H1 (cell line): ENCODE measurements at regions of chr1 and their contacts with region 1.

Region 1: GRCh38 chr1:1565340-1565739 is 9.3 kb downstream of the SSU72 start:
- DNase-seq: no peak
- H3K4me3 ChIP-seq: no peak overlapping the region
- H3K27ac ChIP-seq: no peak overlapping the region; the same call in 1 of the 2 replicates
- H3K4me1 ChIP-seq: peaks cover 0 to 6% (median 2%) of the 10 kb centered on the region in 4 experiments; a peak in 2 of 7 replicates
- H3K27me3 ChIP-seq: no peaks in the 10 kb centered on the region
- CTCF ChIP-seq: no peak
- EP300 ChIP-seq: no peak
- POLR2A ChIP-seq: no peak
- RAD21 ChIP-seq: no peak

Region 2: DNA sequence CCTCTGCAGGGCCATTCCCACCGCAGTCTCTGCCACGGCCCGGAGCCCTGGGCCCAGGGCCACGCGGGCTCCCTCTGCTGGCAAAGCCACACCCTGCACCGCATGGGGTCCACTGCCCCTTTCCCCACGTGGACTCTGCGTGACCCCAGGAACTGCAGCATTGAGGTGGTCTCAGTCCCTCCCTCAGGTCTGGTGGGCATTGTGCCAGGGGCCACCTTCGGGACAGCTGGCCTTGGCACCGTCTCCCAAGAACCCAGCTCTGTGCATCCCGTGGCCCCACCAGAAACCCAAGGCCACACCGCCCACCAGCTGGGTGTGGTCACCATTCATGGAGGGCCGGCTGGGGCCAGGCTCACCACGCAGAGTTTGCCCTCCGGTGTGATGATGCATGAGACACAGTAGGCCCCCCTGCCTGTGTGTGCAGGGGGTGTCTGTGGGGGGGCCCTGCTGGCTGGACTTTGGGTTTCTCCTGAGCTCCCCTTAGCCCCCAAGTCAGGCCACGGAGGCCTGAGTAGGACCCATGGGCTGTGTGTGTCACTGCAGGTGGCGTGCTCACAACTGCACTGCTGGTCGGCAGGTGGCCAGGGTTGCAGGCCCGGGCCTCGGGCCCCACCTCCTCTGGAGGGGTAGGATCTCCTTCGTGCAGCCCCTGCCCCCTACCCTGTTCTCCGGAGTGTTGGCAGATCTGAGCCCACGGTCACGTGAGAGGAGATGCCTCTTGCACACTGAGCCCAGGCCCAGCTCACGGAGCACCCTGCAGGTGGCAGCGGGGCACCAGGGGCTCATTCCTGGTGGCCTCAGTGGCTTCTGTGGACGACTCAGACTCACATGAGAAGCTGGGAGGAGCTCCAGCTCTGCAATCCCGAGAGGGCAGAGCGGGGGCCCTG is 124.1 kb before region 1 on chr1:
- CTCF ChIA-PET with region 1: no interaction called
- POLR2A ChIA-PET with region 1: no interaction called
- DNase-seq: peak in 1 of 2 experiments; percentile 87
- H3K4me3 ChIP-seq: no peak overlapping the region
- H3K27ac ChIP-seq: no peak overlapping the region
- H3K4me1 ChIP-seq: peaks cover 0 to 4% (median 3%) of the 10 kb centered on the region in 4 experiments; a peak in 5 of 7 replicates
- H3K27me3 ChIP-seq: peaks cover 0 to 3% (median 0%) of the 10 kb centered on the region in 4 experiments; a peak in 2 of 7 replicates
- CTCF ChIP-seq: peak in 2 of 3 experiments; percentile 73 to 76; a peak in 3 of 4 replicates
- EP300 ChIP-seq: no peak
- POLR2A ChIP-seq: no peak
- RAD21 ChIP-seq: peak; percentile 61 to 72

Region 3: GRCh38 chr1:1554926-1555915 is 10.1 kb before region 1 on chr1:
- CTCF ChIA-PET with region 1: interaction called, 15 read pairs
- POLR2A ChIA-PET with region 1: interaction called, 367 read pairs
- DNase-seq: no peak
- H3K4me3 ChIP-seq: no peak overlapping the region
- H3K27ac ChIP-seq: no peak overlapping the region
- H3K4me1 ChIP-seq: no peaks in the 10 kb centered on the region; a peak in 2 of 7 replicates
- H3K27me3 ChIP-seq: no peaks in the 10 kb centered on the region
- CTCF ChIP-seq: no peak
- EP300 ChIP-seq: no peak
- POLR2A ChIP-seq: no peak
- RAD21 ChIP-seq: no peak